Activated CD8-positive, alpha-beta T cell treated with anti-CD3 and anti-CD28 coated beads for 36 hours (primary cell): ENCODE measurements at regions of chr18 and their contacts with region 1.

Region 1: GRCh38 chr18:72672364-72673184 is 128.4 kb upstream of the CBLN2 start:
- DNase-seq: peak; percentile 32
- ATAC-seq: peak; percentile 60
- H3K4me3 Mint-ChIP-seq: no peak overlapping the region
- H3K27ac Mint-ChIP-seq: no peak overlapping the region
- H3K4me1 Mint-ChIP-seq: no peaks in the 10 kb centered on the region
- H3K27me3 Mint-ChIP-seq: no peaks in the 10 kb centered on the region
- CTCF ChIP-seq: peak; percentile 69

Region 2: DNA sequence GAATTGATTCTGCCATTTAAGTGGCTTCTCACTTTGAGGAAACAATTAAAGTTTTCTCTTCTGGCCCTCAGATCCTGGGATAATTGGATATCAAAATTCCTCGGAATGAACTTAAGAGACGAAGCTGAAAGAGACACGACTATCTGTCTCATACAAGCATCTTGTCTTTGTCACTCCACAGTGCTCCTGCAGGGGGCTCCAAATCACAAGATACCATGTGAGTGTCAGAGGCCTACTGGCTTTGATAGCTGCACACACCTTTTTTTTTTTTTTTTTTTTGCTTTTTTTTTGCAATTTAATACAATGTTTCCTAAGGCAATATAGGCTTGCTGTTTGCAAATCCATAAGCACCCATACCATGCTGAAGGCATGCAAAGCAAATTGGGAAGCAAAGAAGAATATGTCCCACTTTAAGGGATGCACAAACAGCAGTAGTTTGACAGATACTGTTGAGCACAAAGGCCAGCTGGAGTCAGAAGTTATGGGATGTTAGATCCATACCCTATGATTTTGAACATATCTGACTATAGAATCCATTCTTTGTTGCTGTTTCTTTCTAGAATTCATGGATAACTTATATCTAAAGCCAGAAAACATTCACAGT is 19.5 kb before region 1 on chr18:
- CTCF ChIA-PET with region 1: interaction called, 14 read pairs
- POLR2A ChIA-PET with region 1: no interaction called
- intact Hi-C with region 1: no loop called
- DNase-seq: peak; percentile 67
- ATAC-seq: peak; percentile 51
- H3K4me3 Mint-ChIP-seq: no peak overlapping the region
- H3K27ac Mint-ChIP-seq: no peak overlapping the region
- H3K4me1 Mint-ChIP-seq: no peaks in the 10 kb centered on the region
- H3K27me3 Mint-ChIP-seq: no peaks in the 10 kb centered on the region
- CTCF ChIP-seq: peak; percentile 70

Region 3: GRCh38 chr18:72742002-72742401 is 69.4 kb after region 1 on chr18:
- CTCF ChIA-PET with region 1: no interaction called
- POLR2A ChIA-PET with region 1: no interaction called
- intact Hi-C with region 1: no loop called
- DNase-seq: no peak
- ATAC-seq: no peak
- H3K4me3 Mint-ChIP-seq: no peak overlapping the region
- H3K27ac Mint-ChIP-seq: no peak overlapping the region
- H3K4me1 Mint-ChIP-seq: no peaks in the 10 kb centered on the region
- H3K27me3 Mint-ChIP-seq: no peaks in the 10 kb centered on the region
- CTCF ChIP-seq: no peak